ENCODE measurements at regions of chr4 and their contacts with region 1.

Region 1: DNA sequence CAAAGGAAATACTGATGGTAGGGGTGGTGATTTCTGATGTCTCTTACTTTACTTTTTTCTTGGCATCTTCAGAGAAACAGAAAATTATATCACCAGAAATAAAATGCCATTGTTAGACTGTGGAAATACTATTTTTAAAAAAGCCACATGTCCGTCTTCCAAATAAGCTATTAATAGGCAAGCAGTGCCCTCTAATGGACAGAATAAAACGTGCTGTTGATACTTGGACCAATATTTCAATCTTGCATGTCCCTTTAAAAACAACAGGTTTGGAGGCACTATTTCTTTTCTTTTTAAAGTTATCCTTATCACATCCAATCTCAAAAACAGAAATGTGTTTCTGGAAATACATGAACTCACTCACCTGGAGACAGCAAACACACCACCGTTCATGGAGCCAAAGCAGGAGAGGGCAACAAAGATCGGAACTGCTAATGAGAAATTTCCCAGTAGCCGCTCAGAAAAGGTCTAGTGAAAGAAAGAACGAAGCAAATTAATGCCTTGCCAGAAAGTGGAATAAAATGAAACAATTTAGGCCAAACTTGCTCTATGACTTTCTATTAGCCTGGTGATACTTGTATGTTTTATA is 59.2 kb downstream of the SLC7A11 start:
- DNase-seq: no peak
- H3K4me3 ChIP-seq: no peak overlapping the region
- H3K27ac ChIP-seq: no peak overlapping the region
- H3K4me1 ChIP-seq: peaks cover 14 to 25% (median 19%) of the 10 kb centered on the region in 4 donors
- H3K27me3 ChIP-seq: no peaks in the 10 kb centered on the region
- CTCF ChIP-seq: peak; percentile 60 to 68 (median 67)
- EP300 ChIP-seq: no peak
- POLR2A ChIP-seq: no peak

Region 2: DNA sequence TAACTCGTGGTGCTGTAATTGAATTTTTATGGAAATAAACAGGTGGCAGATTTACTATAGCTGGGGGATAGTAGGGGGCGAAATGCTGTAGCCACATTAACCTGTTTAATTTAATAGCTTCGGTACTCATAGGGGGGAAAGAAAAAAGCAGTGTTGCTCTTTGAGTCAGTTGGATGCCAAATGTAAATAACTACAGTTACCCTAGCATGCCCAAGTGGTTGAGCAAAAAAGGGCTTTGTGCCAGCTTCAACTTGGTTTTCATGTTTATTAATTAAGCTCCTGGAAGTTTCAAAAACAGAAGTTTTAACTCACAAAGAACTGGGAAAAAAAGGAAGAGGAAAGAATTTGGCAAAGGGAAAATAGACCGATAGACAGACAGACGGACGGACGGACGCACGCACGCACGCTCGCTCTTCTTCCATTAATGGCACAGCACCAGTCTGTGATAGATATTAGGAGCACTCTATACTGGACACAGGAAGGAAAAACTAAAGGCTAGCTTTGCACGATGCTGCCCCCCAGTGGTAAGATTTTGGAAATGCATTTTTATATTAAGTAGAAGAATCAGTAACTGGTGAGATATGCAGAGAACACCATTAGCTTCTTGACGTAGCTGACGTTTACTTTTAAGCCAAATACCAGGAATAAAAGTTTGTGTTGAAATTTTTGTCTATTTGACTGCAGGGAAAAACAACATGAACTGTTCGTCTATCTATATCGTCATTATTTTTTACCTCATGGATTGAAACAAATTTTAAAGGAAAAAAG is 92.6 kb before region 1 on chr4:
- intact Hi-C with region 1: loop called (anchors 10 kb)
- DNase-seq: no peak
- H3K4me3 ChIP-seq: peak overlapping the region; percentile 29 to 47 (median 34)
- H3K27ac ChIP-seq: no peak overlapping the region
- H3K4me1 ChIP-seq: peaks cover 7 to 29% (median 16%) of the 10 kb centered on the region in 4 donors
- H3K27me3 ChIP-seq: no peaks in the 10 kb centered on the region
- CTCF ChIP-seq: peak; percentile 69 to 86 (median 84)
- EP300 ChIP-seq: no peak
- POLR2A ChIP-seq: no peak

Measured in esophagus muscularis mucosa (tissue), 4 donors.